ENCODE measurements at regions of chr20 and their contacts with region 1.

Region 1: DNA sequence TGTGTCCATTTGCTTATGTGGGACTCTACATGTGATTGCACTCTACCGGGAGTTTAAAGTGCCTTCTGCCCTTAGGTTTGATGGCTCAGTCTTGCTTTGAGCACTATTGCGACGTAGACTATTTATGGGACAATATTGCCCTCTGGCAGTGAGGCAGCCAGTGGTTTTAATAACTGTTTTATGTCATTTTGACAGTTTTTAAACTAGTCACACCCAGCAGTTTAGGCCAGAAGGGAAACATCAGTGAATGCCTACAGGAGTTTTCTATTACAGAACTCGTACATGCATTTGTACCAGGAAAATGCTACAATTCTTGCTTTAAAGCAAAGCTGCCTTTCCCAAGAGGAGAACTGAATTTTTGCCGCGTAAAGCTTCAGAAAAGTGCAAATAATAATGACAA is 813.7 kb downstream of the KIF16B start:
- DNase-seq: peak in 17 of 42 donors; percentile 8 to 53 (median 32)

Region 2: DNA sequence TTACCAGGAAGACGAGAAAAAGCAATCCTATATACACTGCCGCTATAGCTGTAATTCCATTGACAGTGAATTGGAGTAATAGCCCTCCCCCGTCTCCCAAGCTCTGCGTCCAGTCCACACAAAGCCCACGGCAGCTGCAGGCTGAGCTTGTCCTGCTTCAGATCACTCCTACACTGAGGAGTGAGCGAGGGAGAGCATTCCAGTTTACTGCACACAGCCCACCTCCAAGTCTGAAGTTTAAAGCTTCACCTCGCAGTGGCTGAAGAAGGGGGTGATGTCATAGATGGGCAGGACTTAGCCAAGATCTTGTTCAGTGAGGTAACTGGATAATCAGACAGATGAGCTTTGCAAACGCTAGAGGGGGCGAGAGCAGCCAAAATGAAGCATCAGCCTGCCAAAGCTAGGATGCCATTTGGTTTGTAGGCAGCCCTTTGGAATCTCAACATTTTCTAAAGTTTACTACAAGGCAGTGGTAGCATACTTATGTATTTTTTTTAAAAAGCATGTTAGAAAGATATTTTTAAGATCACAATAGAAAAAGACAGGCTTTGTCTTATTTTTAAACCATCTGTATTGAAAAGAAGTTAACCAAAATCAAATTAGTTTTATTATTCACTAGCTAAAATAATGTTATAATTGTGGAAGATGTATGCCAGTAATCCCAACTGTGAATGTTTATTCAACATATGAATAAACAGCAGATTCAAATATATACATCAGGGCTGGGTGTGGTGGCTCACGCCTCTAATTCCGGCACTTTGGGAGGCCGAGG is 1422.0 kb before region 1 on chr20 and contains the start of gene FLRT3:
- intact Hi-C with region 1: loop called (anchors 10 kb)
- DNase-seq: peak; percentile 59 to 95 (median 84)